ENCODE measurements at regions of chr12 and their contacts with region 1.

Region 1: GRCh38 chr12:13534645-13535398 is 338.3 kb downstream of the EMP1 start:
- DNase-seq: peak; percentile 39
- H3K4me3 ChIP-seq: peak overlapping the region in 1 of 2 experiments; percentile 44; a peak in 1 of 4 replicates
- H3K27ac ChIP-seq: no peak overlapping the region
- H3K4me1 ChIP-seq: no peaks in the 10 kb centered on the region
- H3K27me3 ChIP-seq: no peaks in the 10 kb centered on the region; the same call in 1 of the 2 replicates
- CTCF ChIP-seq: peak; percentile 92
- EP300 ChIP-seq: no peak
- RAD21 ChIP-seq: peak; percentile 72

Region 2: DNA sequence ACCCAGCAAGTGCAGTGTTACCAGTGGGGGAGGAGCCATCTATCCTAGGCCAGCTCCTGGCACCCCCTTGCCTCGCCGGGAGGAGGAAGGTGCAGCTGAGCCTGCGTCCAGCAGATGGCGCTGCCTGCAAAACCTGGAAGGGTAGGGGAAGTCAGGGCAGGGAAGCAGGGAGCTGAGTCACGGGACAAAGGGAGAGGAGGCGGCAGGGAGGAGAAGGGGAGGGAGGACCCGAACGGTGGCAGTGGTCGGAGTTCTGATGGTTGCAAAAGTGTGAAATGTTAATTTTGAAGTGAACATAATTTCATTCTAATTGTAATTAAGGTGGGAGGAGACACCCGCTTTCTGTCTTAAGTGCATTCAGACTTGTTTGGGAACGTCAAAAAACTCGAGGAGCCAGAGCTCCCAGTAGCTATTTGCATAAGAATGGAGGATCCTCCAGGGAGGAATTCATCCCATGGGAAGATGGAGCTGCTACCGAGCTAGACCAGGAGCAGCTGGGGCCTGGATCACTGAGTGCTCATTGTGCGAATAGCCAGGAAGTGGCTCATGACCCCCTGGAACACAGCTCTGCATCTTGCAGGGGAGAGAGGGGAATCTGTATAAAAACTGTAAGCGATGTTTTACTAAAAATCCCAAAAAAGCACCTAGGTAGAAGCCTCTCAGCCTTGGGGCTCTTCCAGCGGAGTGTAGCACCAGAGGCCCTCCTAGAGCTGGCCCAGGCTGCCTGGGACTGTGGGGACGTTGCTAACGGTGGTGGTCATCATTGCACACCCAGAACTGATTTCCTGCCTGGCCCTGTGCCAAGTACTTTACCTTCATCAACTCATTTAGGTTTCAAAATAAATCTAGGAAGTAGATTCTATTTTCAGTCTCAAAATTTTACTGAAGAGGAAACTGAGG is 278.8 kb before region 1 on chr12:
- CTCF ChIA-PET with region 1: interaction called, 17 read pairs
- POLR2A ChIA-PET with region 1: no interaction called
- DNase-seq: peak; percentile 87
- H3K4me3 ChIP-seq: peak overlapping the region; percentile 30 to 59; a peak in 3 of 4 replicates
- H3K27ac ChIP-seq: no peak overlapping the region
- H3K4me1 ChIP-seq: peaks cover 0 to 4% of the 10 kb centered on the region in 2 experiments; a peak in 1 of 4 replicates
- H3K27me3 ChIP-seq: no peaks in the 10 kb centered on the region; the same call in 1 of the 2 replicates
- CTCF ChIP-seq: peak; percentile 99
- EP300 ChIP-seq: peak in 1 of 2 experiments; percentile 16; a peak in 1 of 4 replicates
- RAD21 ChIP-seq: peak; percentile 75

Region 3: DNA sequence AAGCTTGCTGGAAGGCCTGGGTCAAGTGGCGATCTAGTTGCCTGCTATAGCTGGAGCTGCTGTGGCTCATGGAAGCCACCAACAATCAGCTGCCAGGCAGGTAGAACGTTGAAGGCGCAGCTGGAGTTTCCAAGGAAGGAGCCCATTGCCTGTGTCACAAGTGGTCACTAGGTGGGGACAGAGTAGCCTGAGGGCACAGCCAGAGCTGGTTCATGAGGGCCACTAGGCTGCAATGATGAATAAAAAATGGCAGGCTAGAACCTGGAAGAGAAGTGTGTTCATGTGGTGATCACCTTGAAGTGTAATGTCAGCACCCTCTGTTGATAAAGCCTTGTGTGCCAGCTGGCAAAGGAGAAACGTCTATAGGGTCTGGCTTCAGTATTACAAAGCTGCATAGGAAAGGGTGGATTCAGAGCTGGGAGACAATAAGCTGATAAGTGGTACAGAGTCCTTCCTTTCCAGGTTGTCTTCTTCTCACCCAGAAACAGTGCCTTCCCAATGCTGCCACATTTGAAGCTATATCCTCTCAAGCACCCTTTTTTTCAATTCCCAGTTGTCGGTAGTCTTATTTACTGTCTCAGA is 172.5 kb before region 1 on chr12:
- CTCF ChIA-PET with region 1: interaction called, 26 read pairs
- POLR2A ChIA-PET with region 1: no interaction called
- DNase-seq: peak; percentile 65
- H3K4me3 ChIP-seq: 0 out of 4 replicates have a peak overlapping the region, but pooled peaks of 1 of the 2 experiments have one; percentile 33
- H3K27ac ChIP-seq: no peak overlapping the region
- H3K4me1 ChIP-seq: no peaks in the 10 kb centered on the region
- H3K27me3 ChIP-seq: peaks cover 4% of the 10 kb centered on the region; the same call in 1 of the 2 replicates
- CTCF ChIP-seq: peak; percentile 88
- EP300 ChIP-seq: no peak
- RAD21 ChIP-seq: peak; percentile 74

Region 4: DNA sequence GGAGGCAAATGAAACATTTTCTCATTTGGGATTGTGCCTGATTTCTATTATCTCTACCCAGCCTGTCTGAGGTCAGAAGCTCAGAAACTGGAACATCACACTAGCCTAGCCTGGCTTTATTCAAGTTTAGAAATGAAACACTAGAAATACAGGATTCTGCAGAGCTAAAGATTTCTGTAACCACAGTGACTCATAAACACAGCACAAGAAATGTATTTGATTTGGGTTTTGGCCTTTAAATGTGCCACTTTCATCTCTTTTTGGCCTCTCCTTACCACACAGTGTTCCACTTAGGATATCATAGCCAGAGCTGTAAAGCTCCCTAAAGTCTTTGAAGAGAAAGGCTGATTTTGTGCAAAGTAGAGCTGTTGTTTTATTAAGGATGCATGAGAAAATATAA is 30.7 kb before region 1 on chr12:
- CTCF ChIA-PET with region 1: interaction called, 11 read pairs
- POLR2A ChIA-PET with region 1: no interaction called
- DNase-seq: no peak
- H3K4me3 ChIP-seq: no peak overlapping the region
- H3K27ac ChIP-seq: no peak overlapping the region
- H3K4me1 ChIP-seq: no peaks in the 10 kb centered on the region
- H3K27me3 ChIP-seq: no peaks in the 10 kb centered on the region; the same call in 1 of the 2 replicates
- CTCF ChIP-seq: no peak
- EP300 ChIP-seq: no peak
- RAD21 ChIP-seq: no peak

Region 5: DNA sequence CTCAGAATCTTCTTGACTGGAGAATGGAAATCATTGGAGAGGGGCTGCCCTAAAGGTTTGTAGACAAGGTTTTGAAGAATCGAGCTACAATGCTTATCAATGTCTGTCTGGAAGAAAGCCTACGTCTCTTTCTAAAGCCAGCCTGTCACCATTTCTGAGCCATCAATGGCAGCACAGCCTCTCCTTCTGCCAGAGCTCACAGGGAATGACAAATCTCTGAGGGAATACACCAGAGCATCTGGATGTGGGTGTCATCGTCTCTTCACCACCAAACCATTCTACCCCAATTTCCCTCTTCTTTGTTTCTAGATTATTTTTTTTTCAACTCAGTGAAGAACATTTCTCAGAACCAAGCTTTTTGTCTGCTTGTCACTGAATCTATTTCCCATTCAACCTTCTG is 11.4 kb after region 1 on chr12:
- CTCF ChIA-PET with region 1: interaction called, 29 read pairs
- POLR2A ChIA-PET with region 1: no interaction called
- DNase-seq: no peak
- H3K4me3 ChIP-seq: no peak overlapping the region
- H3K27ac ChIP-seq: no peak overlapping the region
- H3K4me1 ChIP-seq: no peaks in the 10 kb centered on the region
- H3K27me3 ChIP-seq: no peaks in the 10 kb centered on the region
- CTCF ChIP-seq: no peak
- EP300 ChIP-seq: no peak
- RAD21 ChIP-seq: no peak

Region 6: DNA sequence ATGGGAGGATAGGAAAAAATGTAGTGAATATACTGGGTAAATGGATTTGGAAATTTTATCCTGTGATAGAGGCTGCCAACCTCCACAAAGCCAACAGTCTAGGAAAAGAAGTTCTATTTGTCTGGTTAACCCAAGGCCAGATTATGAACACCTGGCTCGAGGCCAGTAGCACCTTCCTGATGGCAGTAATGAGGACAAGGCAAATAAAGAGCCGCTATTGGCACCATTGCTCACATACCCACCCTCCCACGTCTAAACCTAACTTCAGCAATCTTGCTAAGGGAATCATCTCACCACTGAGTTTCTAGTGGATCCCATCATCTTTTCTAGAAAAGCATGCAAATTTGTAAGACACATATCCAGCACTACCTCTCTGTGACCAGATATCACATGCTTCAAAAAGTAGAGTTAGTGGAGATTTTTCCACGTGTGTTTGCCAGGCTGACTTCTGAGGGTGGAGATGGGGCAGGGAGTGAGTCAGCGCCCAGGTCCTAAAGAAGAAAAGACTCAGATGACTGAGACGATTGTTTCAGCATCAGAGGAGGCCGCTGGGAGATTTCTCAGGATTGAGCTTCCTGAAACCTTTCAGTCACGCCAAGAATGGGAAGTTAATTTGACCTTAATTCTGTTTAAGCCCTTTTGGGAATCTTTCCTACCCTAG is 24.6 kb after region 1 on chr12:
- CTCF ChIA-PET with region 1: interaction called, 11 read pairs
- POLR2A ChIA-PET with region 1: no interaction called
- DNase-seq: no peak
- H3K4me3 ChIP-seq: no peak overlapping the region
- H3K27ac ChIP-seq: no peak overlapping the region
- H3K4me1 ChIP-seq: no peaks in the 10 kb centered on the region
- H3K27me3 ChIP-seq: no peaks in the 10 kb centered on the region
- CTCF ChIP-seq: no peak
- EP300 ChIP-seq: no peak
- RAD21 ChIP-seq: no peak

Region 7: GRCh38 chr12:13799574-13799973 is 264.8 kb after region 1 on chr12:
- CTCF ChIA-PET with region 1: no interaction called
- POLR2A ChIA-PET with region 1: no interaction called
- DNase-seq: no peak
- H3K4me3 ChIP-seq: no peak overlapping the region
- H3K27ac ChIP-seq: no peak overlapping the region
- H3K4me1 ChIP-seq: no peaks in the 10 kb centered on the region
- H3K27me3 ChIP-seq: no peaks in the 10 kb centered on the region
- CTCF ChIP-seq: no peak
- EP300 ChIP-seq: no peak
- RAD21 ChIP-seq: no peak